Naive thymus-derived CD4-positive, alpha-beta T cell (primary cell): ENCODE measurements at regions of chr3 and their contacts with region 1.

Region 1: DNA sequence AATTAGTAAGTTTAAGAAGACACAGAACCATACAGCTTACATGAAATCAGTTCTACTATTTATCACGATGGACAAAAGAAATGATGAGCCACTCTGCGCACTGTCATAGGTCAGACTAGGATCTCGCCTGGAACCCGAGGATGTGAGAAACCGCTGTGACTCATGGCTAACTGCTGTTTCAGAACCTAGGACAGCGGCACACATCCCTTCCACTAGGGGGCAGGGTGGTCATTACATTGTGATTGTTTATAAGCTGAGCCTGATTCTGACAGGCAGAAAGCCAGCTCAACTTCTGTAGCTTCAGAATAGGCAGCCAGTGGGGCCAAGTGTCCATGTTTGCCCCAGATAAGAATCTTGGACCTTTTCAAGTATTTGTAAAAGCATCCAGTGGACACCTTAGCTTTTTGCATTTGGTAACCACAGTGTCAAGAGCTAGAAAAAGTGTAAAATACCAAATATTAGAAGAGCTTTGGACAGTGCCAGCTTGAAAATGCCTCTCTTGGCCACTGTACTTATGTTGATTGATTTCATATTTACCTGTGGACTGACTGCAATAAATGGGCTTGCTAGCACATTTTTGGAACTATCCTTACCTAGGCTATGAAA is 115.8 kb downstream of the KBTBD8 start:
- DNase-seq: peak; percentile 29 to 78 (median 65)
- ATAC-seq: peak; percentile 93
- H3K4me3 ChIP-seq: no peak overlapping the region
- H3K4me3 Mint-ChIP-seq: no peak overlapping the region
- H3K27ac ChIP-seq: no peak overlapping the region
- H3K27ac Mint-ChIP-seq: no peak overlapping the region
- H3K4me1 ChIP-seq: no peaks in the 10 kb centered on the region
- H3K4me1 Mint-ChIP-seq: peaks cover 0 to 6% (median 0%) of the 10 kb centered on the region in 7 donors
- H3K27me3 ChIP-seq: no peaks in the 10 kb centered on the region
- H3K27me3 Mint-ChIP-seq: peaks cover 7 to 31% (median 21%) of the 10 kb centered on the region in 5 donors

Region 2: DNA sequence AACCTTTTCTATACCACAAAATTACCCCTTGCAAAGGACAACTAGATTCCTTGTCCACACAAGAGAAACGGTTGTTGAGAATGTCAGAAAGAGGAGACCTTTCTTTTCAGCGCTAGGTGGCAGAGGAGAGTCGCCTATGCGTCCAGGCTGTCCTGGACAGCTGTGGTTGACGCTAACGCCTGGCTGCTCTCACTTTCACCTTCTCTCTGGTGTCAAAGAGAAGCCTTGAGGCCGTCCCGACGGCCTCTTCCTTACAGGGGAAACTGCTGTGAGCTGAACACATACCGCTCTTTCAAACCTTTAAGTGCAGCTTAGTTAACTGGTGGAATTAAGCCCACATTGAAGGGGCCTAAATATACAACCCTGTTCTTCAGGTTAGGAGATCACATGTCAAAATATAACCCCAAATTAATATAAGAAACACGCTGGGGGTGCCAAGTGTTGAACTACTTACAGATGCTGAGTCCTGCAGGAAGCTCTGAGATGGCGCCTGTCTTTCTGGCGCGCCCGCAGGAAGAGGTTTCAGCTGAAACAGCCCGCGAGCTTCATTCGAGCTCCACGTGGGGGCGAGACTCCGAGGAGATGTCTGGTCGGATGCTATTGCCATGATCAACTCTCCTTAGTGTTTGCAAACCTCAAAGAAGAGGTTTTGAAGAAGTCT is 141.9 kb before region 1 on chr3:
- CTCF ChIA-PET with region 1: interaction called, 17 read pairs
- POLR2A ChIA-PET with region 1: no interaction called
- intact Hi-C with region 1: loop called (anchors 1 to 2 kb)
- DNase-seq: peak; percentile 24 to 59 (median 48)
- ATAC-seq: peak; percentile 93
- H3K4me3 ChIP-seq: peak overlapping the region; percentile 69
- H3K4me3 Mint-ChIP-seq: peak overlapping the region; percentile 75 to 94 (median 88)
- H3K27ac ChIP-seq: peak overlapping the region; percentile 54
- H3K27ac Mint-ChIP-seq: peak overlapping the region; percentile 24 to 95 (median 68)
- H3K4me1 ChIP-seq: peaks cover 5 to 7% of the 10 kb centered on the region in 2 donors
- H3K4me1 Mint-ChIP-seq: peaks cover 0 to 20% (median 12%) of the 10 kb centered on the region in 7 donors
- H3K27me3 ChIP-seq: no peaks in the 10 kb centered on the region
- H3K27me3 Mint-ChIP-seq: peaks cover 0 to 10% (median 0%) of the 10 kb centered on the region in 5 donors

Region 3: DNA sequence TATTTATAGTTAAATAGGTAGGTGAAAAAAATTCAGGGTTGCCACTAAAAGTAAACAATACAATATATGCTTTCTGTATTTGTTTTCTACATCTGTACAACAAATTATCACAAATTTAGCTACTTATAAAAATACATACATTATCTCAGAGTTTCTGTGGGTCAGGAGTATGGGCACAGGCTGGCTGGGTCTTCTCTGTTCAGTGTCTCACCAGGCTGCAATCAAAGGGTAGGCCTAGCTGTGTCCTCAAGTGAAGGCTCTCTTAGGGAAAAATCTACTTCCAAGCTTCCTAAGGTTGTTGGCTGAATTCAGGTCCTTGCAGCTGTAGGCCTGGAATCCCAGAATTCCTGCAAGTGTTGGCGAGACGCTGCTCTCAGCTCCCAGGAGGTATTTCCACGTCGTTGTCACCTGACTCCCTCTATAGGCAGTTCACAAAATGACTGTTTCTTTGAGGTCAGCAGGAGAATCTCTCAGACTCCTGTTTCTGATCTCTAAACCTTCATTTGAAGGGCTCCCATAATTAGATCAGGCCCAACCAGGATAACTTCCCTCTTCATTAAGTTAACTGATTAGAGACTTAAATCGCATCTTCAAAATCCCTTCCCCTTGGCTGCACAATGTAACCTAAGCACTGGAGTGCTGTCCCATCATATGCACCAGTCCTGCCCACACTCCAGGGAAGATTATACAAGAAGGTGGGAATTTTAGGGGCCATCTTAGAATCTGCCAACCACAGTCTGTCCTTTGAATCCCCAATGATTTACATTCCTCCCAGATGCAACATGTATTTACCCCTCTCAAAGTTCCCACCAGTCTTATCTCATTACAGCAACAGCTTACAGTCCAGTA is 243.9 kb after region 1 on chr3:
- CTCF ChIA-PET with region 1: no interaction called
- POLR2A ChIA-PET with region 1: no interaction called
- intact Hi-C with region 1: loop called in 1 of 2 experiments (anchors 5 kb)
- DNase-seq: no peak
- ATAC-seq: no peak
- H3K4me3 ChIP-seq: no peak overlapping the region
- H3K4me3 Mint-ChIP-seq: peak overlapping the region in 3 of 10 donors; percentile 36 to 49 (median 42)
- H3K27ac ChIP-seq: no peak overlapping the region
- H3K27ac Mint-ChIP-seq: no peak overlapping the region
- H3K4me1 ChIP-seq: peaks cover 0 to 3% of the 10 kb centered on the region in 2 donors
- H3K4me1 Mint-ChIP-seq: peaks cover 0 to 29% (median 6%) of the 10 kb centered on the region in 7 donors
- H3K27me3 ChIP-seq: no peaks in the 10 kb centered on the region
- H3K27me3 Mint-ChIP-seq: no peaks in the 10 kb centered on the region

Region 4: DNA sequence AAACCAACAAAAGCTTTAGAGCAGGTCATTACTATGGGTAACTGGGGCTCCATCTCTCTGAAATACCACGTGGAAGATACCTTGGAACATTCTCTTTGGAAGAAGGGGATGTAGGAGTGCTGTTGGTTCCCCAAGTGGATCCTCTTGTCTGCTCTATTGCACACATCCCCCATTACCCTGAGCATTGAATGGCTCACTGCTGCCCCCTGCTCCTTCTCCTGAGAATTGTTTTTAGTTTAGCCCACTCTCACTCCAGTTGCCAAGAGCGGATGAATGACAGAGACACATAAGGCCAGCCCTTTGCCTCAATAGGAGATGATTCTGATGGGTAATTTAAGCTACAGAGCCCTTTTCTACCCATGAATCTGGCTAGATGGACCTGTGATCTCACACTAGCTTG is 676.1 kb after region 1 on chr3:
- CTCF ChIA-PET with region 1: interaction called, 16 read pairs
- POLR2A ChIA-PET with region 1: no interaction called
- intact Hi-C with region 1: loop called (anchors 1 kb)
- DNase-seq: peak; percentile 17 to 75 (median 61)
- ATAC-seq: peak; percentile 78
- H3K4me3 ChIP-seq: no peak overlapping the region
- H3K4me3 Mint-ChIP-seq: peak overlapping the region in 3 of 10 donors; percentile 3 to 19 (median 19)
- H3K27ac ChIP-seq: no peak overlapping the region
- H3K27ac Mint-ChIP-seq: peak overlapping the region in 1 of 9 donors; percentile 3
- H3K4me1 ChIP-seq: peaks cover 0 to 9% of the 10 kb centered on the region in 2 donors
- H3K4me1 Mint-ChIP-seq: peaks cover 6 to 23% (median 15%) of the 10 kb centered on the region in 7 donors
- H3K27me3 ChIP-seq: no peaks in the 10 kb centered on the region
- H3K27me3 Mint-ChIP-seq: peaks cover 0 to 7% (median 0%) of the 10 kb centered on the region in 5 donors

Region 5: GRCh38 chr3:68256635-68257223 is 1142.8 kb after region 1 on chr3:
- CTCF ChIA-PET with region 1: no interaction called
- POLR2A ChIA-PET with region 1: no interaction called
- intact Hi-C with region 1: loop called in 1 of 2 experiments (anchors 1 kb)
- DNase-seq: peak in 6 of 9 donors; percentile 13 to 31 (median 22)
- ATAC-seq: no peak
- H3K4me3 ChIP-seq: no peak overlapping the region
- H3K4me3 Mint-ChIP-seq: no peak overlapping the region
- H3K27ac ChIP-seq: no peak overlapping the region
- H3K27ac Mint-ChIP-seq: peak overlapping the region in 1 of 9 donors; percentile 29
- H3K4me1 ChIP-seq: peaks cover 0 to 3% of the 10 kb centered on the region in 2 donors
- H3K4me1 Mint-ChIP-seq: peaks cover 0 to 8% (median 4%) of the 10 kb centered on the region in 7 donors
- H3K27me3 ChIP-seq: no peaks in the 10 kb centered on the region
- H3K27me3 Mint-ChIP-seq: no peaks in the 10 kb centered on the region

Region 6: DNA sequence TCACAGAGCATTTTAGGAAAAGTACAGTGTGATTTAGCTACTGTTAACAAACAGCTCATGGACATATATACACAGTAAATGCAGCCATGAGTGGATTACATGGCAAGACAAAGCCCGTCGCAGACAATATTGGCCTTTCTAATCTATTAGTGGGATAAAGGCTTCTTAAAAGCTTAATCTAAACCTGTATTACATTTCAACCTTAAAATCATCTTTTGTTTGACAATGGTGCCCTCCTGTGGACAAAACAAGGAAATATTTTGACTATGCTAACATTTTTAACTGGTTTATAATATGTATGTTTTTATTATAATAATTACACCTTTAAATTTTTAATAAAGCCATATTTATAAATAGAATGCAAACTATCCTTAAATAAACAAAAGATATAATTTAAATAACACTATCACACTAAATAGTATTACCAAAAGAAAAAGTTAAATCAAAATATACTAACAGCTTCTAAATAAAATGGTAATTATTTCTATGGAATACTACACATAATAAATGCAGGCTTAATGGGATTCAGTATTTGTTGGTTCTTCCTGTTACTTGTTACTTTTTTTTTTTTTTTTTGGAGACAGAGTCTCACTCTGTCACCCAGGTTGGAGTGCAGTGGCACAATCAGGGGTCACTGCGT is 1779.8 kb after region 1 on chr3:
- CTCF ChIA-PET with region 1: interaction called, 13 read pairs
- POLR2A ChIA-PET with region 1: no interaction called
- intact Hi-C with region 1: loop called (anchors 1 to 5 kb)
- DNase-seq: peak in 7 of 9 donors; percentile 3 to 42 (median 24)
- ATAC-seq: no peak
- H3K4me3 ChIP-seq: no peak overlapping the region
- H3K4me3 Mint-ChIP-seq: no peak overlapping the region
- H3K27ac ChIP-seq: no peak overlapping the region
- H3K27ac Mint-ChIP-seq: no peak overlapping the region
- H3K4me1 ChIP-seq: no peaks in the 10 kb centered on the region
- H3K4me1 Mint-ChIP-seq: no peaks in the 10 kb centered on the region
- H3K27me3 ChIP-seq: no peaks in the 10 kb centered on the region
- H3K27me3 Mint-ChIP-seq: peaks cover 5 to 20% (median 6%) of the 10 kb centered on the region in 5 donors